CD8-positive, alpha-beta T cell (primary cell): ENCODE measurements at regions of chr9 and their contacts with region 1.

Region 1: GRCh38 chr9:75027187-75028107 is 646 bp downstream of the CARNMT1 start:
- DNase-seq: peak in 8 of 9 experiments; percentile 20 to 69 (median 36)
- ATAC-seq: no peak
- H3K4me3 ChIP-seq: peak overlapping the region; percentile 60 to 72
- H3K4me3 Mint-ChIP-seq: peak overlapping the region; percentile 98
- H3K27ac ChIP-seq: peak overlapping the region; percentile 63 to 73
- H3K27ac Mint-ChIP-seq: peak overlapping the region; percentile 97
- H3K4me1 ChIP-seq: peaks cover 32% of the 10 kb centered on the region
- H3K4me1 Mint-ChIP-seq: peaks cover 49% of the 10 kb centered on the region
- H3K27me3 ChIP-seq: no peaks in the 10 kb centered on the region
- H3K27me3 Mint-ChIP-seq: no peaks in the 10 kb centered on the region
- CTCF ChIP-seq: no peak

Region 2: DNA sequence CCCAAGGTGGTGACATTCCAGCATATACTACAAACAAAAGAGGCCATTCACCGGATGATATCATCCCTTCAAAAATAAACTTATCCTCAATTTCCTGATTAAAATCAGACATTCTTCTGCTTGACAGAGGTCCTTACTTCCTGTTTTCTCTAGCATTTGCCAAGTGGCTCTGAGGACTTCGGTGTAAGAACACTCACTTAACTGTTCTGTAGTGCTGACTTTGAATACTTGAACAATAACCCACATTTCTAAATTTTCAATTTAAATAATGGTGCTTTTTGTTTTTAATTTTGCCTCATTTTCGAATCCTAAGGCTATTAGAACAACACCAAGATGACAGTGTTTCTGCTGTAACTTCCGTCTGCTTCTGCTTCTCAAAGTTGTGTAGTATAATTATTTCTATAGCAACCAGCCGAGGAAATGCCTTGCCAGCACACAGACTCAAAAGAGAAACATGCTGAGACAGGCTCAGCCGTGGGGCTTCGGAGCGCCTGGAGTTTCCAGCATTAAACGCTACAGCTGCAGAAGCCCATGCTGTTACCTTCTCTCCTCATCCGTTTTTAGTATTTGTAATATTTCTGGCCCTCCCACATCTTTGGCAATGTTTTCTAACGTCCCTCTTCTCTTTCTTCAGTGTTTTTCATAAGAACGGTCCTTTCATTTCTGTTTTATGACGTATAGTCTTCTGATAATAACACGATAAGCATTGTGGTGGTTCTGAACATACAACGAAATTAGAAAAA is 1895.2 kb before region 1 on chr9:
- CTCF ChIA-PET with region 1: no interaction called
- POLR2A ChIA-PET with region 1: no interaction called
- intact Hi-C with region 1: loop called in 1 of 2 experiments (anchors 10 kb)
- DNase-seq: peak; percentile 51 to 92 (median 72)
- ATAC-seq: peak; percentile 90
- H3K4me3 ChIP-seq: peak overlapping the region; percentile 57 to 65
- H3K4me3 Mint-ChIP-seq: peak overlapping the region; percentile 87
- H3K27ac ChIP-seq: peak overlapping the region; percentile 87 to 94
- H3K27ac Mint-ChIP-seq: peak overlapping the region; percentile 95
- H3K4me1 ChIP-seq: peaks cover 7% of the 10 kb centered on the region
- H3K4me1 Mint-ChIP-seq: peaks cover 25% of the 10 kb centered on the region
- H3K27me3 ChIP-seq: no peaks in the 10 kb centered on the region
- H3K27me3 Mint-ChIP-seq: no peaks in the 10 kb centered on the region
- CTCF ChIP-seq: no peak

Region 3: GRCh38 chr9:74277532-74277931 is 749.9 kb before region 1 on chr9:
- CTCF ChIA-PET with region 1: no interaction called
- POLR2A ChIA-PET with region 1: no interaction called
- intact Hi-C with region 1: no loop called
- DNase-seq: peak in 5 of 9 experiments; percentile 9 to 80 (median 46)
- ATAC-seq: peak; percentile 78
- H3K4me3 ChIP-seq: no peak overlapping the region
- H3K4me3 Mint-ChIP-seq: no peak overlapping the region
- H3K27ac ChIP-seq: peak overlapping the region in 1 of 2 experiments; percentile 30
- H3K27ac Mint-ChIP-seq: peak overlapping the region; percentile 34
- H3K4me1 ChIP-seq: no peaks in the 10 kb centered on the region
- H3K4me1 Mint-ChIP-seq: peaks cover 11% of the 10 kb centered on the region
- H3K27me3 ChIP-seq: no peaks in the 10 kb centered on the region
- H3K27me3 Mint-ChIP-seq: no peaks in the 10 kb centered on the region
- CTCF ChIP-seq: no peak

Region 4: GRCh38 chr9:74463825-74464224 is 563.6 kb before region 1 on chr9:
- CTCF ChIA-PET with region 1: no interaction called
- POLR2A ChIA-PET with region 1: no interaction called
- intact Hi-C with region 1: no loop called
- DNase-seq: no peak
- ATAC-seq: no peak
- H3K4me3 ChIP-seq: no peak overlapping the region
- H3K4me3 Mint-ChIP-seq: no peak overlapping the region
- H3K27ac ChIP-seq: no peak overlapping the region
- H3K27ac Mint-ChIP-seq: no peak overlapping the region
- H3K4me1 ChIP-seq: no peaks in the 10 kb centered on the region
- H3K4me1 Mint-ChIP-seq: no peaks in the 10 kb centered on the region
- H3K27me3 ChIP-seq: no peaks in the 10 kb centered on the region
- H3K27me3 Mint-ChIP-seq: no peaks in the 10 kb centered on the region
- CTCF ChIP-seq: no peak

Region 5: GRCh38 chr9:74557571-74557970 is 469.9 kb before region 1 on chr9:
- CTCF ChIA-PET with region 1: no interaction called
- POLR2A ChIA-PET with region 1: no interaction called
- intact Hi-C with region 1: no loop called
- DNase-seq: no peak
- ATAC-seq: no peak
- H3K4me3 ChIP-seq: no peak overlapping the region
- H3K4me3 Mint-ChIP-seq: no peak overlapping the region
- H3K27ac ChIP-seq: no peak overlapping the region
- H3K27ac Mint-ChIP-seq: no peak overlapping the region
- H3K4me1 ChIP-seq: no peaks in the 10 kb centered on the region
- H3K4me1 Mint-ChIP-seq: no peaks in the 10 kb centered on the region
- H3K27me3 ChIP-seq: no peaks in the 10 kb centered on the region
- H3K27me3 Mint-ChIP-seq: no peaks in the 10 kb centered on the region
- CTCF ChIP-seq: no peak

Region 6: DNA sequence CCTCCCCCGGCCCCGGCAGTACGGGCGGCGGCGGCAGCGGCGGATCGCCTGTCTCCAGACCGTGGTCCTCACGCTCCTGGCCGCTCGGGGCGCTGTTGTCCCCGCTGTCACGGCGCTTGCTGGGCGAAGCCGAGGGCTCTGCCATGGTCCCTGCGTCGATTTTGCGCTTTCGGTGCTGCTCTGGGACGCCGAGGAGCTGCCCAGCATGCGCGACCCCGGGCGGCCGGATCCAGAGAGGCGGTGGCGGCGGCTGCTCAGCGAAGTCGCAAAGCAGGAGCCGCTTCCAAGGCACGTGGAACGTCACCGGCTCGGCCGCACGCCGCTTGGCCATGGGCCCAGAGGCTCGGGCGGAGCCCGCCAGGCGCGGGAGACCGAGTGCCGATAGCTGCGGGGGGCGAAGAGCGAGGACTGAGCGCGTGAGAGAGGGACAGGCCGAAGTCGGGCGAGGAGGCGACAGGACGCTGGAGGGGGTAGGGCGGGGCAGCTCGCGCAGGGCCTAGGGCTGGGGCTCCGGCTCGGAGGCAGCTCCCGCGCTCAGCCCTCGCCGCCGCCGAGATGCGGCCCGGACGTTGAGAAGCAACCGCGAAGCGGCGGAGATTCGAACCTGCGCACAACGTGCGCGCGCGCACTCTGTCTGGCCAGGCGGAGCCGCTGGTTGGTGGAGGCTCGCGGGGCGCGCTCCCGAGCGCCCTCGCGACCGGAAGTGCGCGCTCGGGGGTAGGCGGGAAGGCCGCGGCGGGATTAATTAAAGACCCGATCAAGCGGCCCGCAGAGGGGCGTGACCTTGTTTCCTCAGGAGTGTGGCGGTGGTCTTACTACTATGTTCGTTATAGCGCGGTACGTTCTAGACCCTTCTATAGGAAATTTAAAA is 74.9 kb before region 1 on chr9 and contains the start of gene C9orf40:
- CTCF ChIA-PET with region 1: interaction called, 42 read pairs
- POLR2A ChIA-PET with region 1: interaction called, 22 read pairs
- intact Hi-C with region 1: loop called (anchors 1 kb)
- DNase-seq: peak; percentile 81 to 93 (median 92)
- ATAC-seq: peak; percentile 88
- H3K4me3 ChIP-seq: peak within 1 kb of the TSS; percentile 86 to 99
- H3K4me3 Mint-ChIP-seq: peak within 1 kb of the TSS; percentile 98
- H3K27ac ChIP-seq: peak within 1 kb of the TSS; percentile 87 to 95
- H3K27ac Mint-ChIP-seq: peak within 1 kb of the TSS; percentile 94
- H3K4me1 ChIP-seq: no peaks in the 10 kb centered on the region
- H3K4me1 Mint-ChIP-seq: peaks cover 20% of the 10 kb centered on the region
- H3K27me3 ChIP-seq: no peaks in the 10 kb centered on the region
- H3K27me3 Mint-ChIP-seq: no peaks in the 10 kb centered on the region
- CTCF ChIP-seq: peak; percentile 77
- total RNA-seq, gene C9orf40: 1.5 to 2.3 TPM

Region 7: GRCh38 chr9:75088260-75088905 is 60.9 kb after region 1 on chr9 and contains the start of gene OSTF1:
- CTCF ChIA-PET with region 1: interaction called, 5 read pairs
- POLR2A ChIA-PET with region 1: interaction called, 69 read pairs
- intact Hi-C with region 1: loop called (anchors 1 kb)
- DNase-seq: peak; percentile 85 to 98 (median 92)
- ATAC-seq: peak; percentile 78
- H3K4me3 ChIP-seq: peak within 1 kb of the TSS; percentile 92 to 98
- H3K4me3 Mint-ChIP-seq: peak within 1 kb of the TSS; percentile 98
- H3K27ac ChIP-seq: peak within 1 kb of the TSS; percentile 89 to 95
- H3K27ac Mint-ChIP-seq: peak within 1 kb of the TSS; percentile 97
- H3K4me1 ChIP-seq: peaks cover 52% of the 10 kb centered on the region
- H3K4me1 Mint-ChIP-seq: peaks cover 74% of the 10 kb centered on the region
- H3K27me3 ChIP-seq: no peaks in the 10 kb centered on the region
- H3K27me3 Mint-ChIP-seq: no peaks in the 10 kb centered on the region
- CTCF ChIP-seq: no peak
- total RNA-seq, gene OSTF1: 29.1 to 30.3 TPM

Region 8: DNA sequence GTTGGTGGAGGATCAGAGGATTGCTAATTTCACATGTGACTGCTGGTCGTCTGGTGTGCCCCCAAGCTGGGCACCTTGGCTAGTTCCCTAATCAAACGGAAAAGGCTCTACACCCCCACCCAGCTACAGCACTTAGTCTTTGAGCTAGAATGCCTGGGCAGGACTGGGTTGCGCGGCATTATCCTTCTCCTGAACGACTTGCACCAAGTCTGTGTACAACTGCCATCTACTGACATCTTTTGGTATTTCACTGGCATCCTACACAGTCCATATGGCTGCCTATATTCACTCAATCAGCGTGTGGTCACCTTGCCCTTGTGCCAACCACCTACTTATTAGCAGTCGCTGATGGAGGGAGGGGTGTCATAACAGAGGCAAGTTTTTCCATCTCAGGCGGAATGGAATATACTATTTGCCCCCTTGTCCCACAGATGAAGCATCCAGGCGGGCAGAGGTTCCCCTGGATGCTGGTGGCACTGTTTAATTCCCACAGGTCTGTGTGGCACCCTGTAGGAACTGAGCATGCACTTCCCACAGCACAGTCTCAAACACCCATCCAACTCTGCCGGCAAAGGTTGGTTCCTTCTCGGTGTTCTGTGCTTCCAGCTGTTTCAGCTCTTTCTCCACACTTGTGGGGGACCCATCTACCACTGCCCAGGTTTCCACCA is 211.0 kb after region 1 on chr9:
- CTCF ChIA-PET with region 1: no interaction called
- POLR2A ChIA-PET with region 1: no interaction called
- intact Hi-C with region 1: loop called in 1 of 2 experiments (anchors 10 kb)
- DNase-seq: peak in 7 of 9 experiments; percentile 1 to 70 (median 27)
- ATAC-seq: peak; percentile 93
- H3K4me3 ChIP-seq: no peak overlapping the region
- H3K4me3 Mint-ChIP-seq: no peak overlapping the region
- H3K27ac ChIP-seq: no peak overlapping the region
- H3K27ac Mint-ChIP-seq: no peak overlapping the region
- H3K4me1 ChIP-seq: no peaks in the 10 kb centered on the region
- H3K4me1 Mint-ChIP-seq: no peaks in the 10 kb centered on the region
- H3K27me3 ChIP-seq: no peaks in the 10 kb centered on the region
- H3K27me3 Mint-ChIP-seq: no peaks in the 10 kb centered on the region
- CTCF ChIP-seq: peak; percentile 62

Region 9: DNA sequence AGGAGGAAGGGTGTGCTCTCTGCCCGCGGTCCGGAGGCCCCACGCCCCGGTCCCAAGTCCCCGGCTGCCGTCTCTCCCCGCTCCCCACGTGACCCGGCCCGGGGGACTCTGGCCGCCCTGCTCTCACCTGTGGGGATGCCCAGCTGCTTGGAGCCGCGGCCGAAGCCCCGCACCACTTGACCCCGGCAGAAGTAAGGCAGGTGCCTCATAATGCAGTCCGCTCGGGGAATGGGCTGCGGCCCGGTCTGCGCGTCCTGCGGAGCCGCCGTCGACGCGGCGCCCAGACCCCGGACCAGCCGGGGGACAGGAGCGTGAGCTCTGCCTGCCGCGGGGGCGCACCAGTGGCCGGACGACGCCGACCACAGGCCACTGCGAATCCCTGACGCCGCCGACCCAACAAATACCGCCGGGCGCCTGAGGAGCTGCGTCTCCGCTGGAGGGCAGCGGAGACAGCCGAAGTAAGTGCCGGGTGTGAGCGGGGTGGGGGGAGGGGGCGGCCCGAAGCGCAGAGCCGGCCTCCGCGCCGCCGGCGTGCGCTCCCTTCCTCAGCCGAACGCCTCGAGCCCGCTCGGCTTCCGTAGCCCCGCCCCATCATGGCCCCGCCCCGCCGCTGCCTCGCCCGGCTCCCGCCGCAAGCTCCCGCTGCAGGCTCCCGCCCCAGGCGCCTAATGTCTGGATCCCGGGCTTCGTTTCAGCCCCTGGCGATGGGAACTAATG is 1366.7 kb after region 1 on chr9 and contains the start of gene RFK:
- CTCF ChIA-PET with region 1: no interaction called
- POLR2A ChIA-PET with region 1: interaction called, 5 read pairs
- intact Hi-C with region 1: loop called (anchors 2 kb)
- DNase-seq: peak; percentile 89 to 96 (median 94)
- ATAC-seq: peak; percentile 88
- H3K4me3 ChIP-seq: peak within 1 kb of the TSS; percentile 89 to 96
- H3K4me3 Mint-ChIP-seq: peak within 1 kb of the TSS; percentile 90
- H3K27ac ChIP-seq: peak within 1 kb of the TSS; percentile 87 to 89
- H3K27ac Mint-ChIP-seq: peak within 1 kb of the TSS; percentile 97
- H3K4me1 ChIP-seq: peaks cover 19% of the 10 kb centered on the region
- H3K4me1 Mint-ChIP-seq: peaks cover 40% of the 10 kb centered on the region
- H3K27me3 ChIP-seq: no peaks in the 10 kb centered on the region
- H3K27me3 Mint-ChIP-seq: no peaks in the 10 kb centered on the region
- CTCF ChIP-seq: no peak
- total RNA-seq, gene RFK: 7.9 to 9.9 TPM